ENCODE measurements at regions of chr2 and their contacts with region 1.

Region 1: GRCh38 chr2:70767699-70768589 is at the start of gene ADD2:
- H3K4me3 ChIP-seq: peak within 1 kb of the TSS; percentile 65
- H3K27ac ChIP-seq: peak within 1 kb of the TSS; percentile 70; the same call in 1 of the 2 replicates
- H3K4me1 ChIP-seq: peaks cover 5% of the 10 kb centered on the region; the same call in 1 of the 2 replicates
- CTCF ChIP-seq: peak; percentile 72; the same call in 1 of the 2 replicates

Region 2: GRCh38 chr2:70656421-70657010 is 111.4 kb before region 1 on chr2:
- CTCF ChIA-PET with region 1: interaction called, 19 read pairs
- POLR2A ChIA-PET with region 1: no interaction called
- H3K4me3 ChIP-seq: no peak overlapping the region
- H3K27ac ChIP-seq: no peak overlapping the region
- H3K4me1 ChIP-seq: no peaks in the 10 kb centered on the region
- CTCF ChIP-seq: no peak

Region 3: GRCh38 chr2:70686577-70687460 is 81.1 kb before region 1 on chr2:
- CTCF ChIA-PET with region 1: interaction called, 17 read pairs
- POLR2A ChIA-PET with region 1: no interaction called
- H3K4me3 ChIP-seq: no peak overlapping the region
- H3K27ac ChIP-seq: no peak overlapping the region
- H3K4me1 ChIP-seq: no peaks in the 10 kb centered on the region; the same call in 1 of the 2 replicates
- CTCF ChIP-seq: peak; percentile 28

Region 4: GRCh38 chr2:70751881-70752280 is 16.1 kb before region 1 on chr2:
- CTCF ChIA-PET with region 1: interaction called, 10 read pairs
- POLR2A ChIA-PET with region 1: interaction called, 3 read pairs
- H3K4me3 ChIP-seq: no peak overlapping the region
- H3K27ac ChIP-seq: no peak overlapping the region
- H3K4me1 ChIP-seq: peaks cover 4% of the 10 kb centered on the region; the same call in 1 of the 2 replicates
- CTCF ChIP-seq: no peak

Region 5: DNA sequence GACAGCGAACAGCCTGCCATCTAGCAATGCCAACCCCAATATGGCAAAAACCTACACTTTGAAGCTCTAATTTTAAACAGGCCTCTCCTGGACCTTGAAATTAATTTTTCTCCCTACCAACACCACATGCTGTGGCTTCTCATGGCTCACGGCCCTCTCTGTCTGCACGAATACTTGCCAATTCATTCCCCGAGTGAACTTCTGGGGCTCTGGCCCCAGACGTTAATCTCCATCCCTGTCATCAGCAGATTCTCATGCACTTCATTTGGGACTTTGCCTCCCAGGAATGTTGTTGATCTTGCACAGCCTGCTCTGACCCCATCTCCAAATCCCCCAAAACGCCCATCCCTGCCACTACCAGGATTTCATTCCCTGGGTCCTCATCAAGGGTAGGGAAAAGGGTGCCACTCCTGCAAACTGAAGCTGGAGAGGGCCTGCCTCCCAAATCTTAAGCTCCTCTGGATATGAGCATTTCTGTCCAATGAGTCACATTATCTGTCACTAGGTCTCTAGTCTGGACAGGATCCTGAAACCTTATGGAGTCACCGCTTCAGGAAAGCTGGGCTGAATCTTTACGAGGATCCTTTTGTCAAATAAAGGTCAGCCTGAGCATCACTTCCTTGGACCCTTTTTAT is 12.1 kb after region 1 on chr2:
- CTCF ChIA-PET with region 1: interaction called, 35 read pairs
- POLR2A ChIA-PET with region 1: no interaction called
- H3K4me3 ChIP-seq: no peak overlapping the region
- H3K27ac ChIP-seq: no peak overlapping the region
- H3K4me1 ChIP-seq: no peaks in the 10 kb centered on the region
- CTCF ChIP-seq: no peak

Region 6: DNA sequence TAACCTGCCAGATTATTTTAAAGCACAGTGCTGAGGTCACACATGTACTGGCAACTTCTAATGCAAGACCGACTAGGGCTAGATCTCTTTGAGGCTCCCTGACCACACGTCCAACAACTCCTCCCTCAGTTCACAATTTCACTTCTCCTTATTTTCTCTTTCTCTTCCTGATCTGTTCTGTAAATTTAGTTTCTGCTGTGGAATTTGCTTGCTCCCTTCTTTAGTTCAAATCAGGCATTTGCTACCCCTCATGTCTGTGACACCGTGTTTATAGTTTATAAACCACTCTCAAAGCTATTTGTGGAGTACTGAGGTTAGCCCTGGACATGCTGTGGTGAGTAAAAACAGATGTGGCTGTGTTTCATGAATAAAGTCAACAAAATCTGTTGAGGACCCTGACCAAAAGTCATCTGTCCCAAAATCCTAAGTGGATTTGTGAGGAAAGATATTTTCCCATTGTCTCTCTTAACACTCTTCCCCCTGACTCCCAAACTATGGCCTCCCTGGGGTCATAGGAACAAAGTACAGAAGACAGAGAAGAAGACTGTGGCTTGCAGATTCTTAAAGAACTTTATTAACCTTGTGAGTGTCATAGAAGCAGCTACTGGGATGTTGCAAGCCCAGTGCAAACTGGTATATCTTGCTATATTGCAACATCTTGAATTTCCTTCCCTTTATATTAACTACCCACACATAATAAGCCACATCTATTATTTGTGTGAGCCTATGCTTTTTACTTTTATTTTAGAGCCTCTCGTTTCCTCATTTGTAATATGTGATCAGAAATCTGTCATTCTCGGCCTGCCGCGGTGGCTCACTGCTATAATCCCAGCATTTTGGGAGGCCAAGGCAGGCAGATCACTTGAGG is 297.0 kb after region 1 on chr2:
- CTCF ChIA-PET with region 1: no interaction called
- POLR2A ChIA-PET with region 1: no interaction called
- H3K4me3 ChIP-seq: no peak overlapping the region
- H3K27ac ChIP-seq: no peak overlapping the region
- H3K4me1 ChIP-seq: no peaks in the 10 kb centered on the region; the same call in 1 of the 2 replicates
- CTCF ChIP-seq: no peak

Measured in HEK293 (cell line).